T-cell (primary cell): ENCODE measurements at regions of chr6 and their contacts with region 1.

Region 1: DNA sequence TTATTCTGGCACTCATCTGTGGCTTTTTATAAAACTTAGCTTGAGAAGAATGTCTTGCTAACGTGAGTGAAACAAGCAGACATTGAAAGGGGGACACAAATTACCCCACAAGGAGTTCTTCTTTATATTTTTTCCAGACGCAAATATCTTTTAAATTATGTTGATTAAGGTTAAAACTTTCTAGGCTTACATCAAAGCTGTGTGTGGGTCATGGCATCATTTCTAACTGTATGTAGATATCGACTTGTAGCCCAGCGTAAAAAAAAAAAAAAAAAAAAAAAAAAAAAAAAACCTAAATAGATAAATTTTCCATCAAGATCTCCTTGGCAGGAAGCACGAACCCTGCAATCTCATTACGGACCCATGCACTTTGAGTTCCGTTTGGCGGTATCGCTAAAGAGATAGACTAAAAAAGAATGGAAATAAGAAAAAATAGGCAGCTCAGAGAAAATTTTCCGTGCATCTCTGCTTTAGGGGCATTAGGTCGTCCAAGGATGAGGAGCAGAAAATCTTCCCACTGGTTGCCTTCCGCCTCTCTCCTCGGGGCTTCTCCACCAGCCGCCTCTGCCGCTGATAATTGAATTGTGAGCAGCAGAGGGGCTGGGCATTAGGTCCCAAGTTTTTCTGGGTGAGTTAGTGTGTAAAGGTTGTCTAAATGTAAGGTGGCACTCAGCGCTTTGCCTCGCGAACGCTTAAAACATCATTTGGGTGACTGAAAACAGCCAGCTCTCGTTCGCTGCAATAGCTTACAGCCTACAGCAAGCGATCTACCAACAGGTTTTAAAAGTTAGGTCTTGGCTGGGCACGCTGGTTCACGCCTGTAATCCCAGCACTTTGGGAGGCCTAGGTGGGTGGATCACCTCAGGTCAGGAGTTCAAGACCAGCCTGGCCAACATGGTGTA is 194.0 kb downstream of the TRIM27 start:
- DNase-seq: no peak
- ATAC-seq: no peak
- H3K4me3 ChIP-seq: peak overlapping the region in 1 of 2 donors; percentile 2
- H3K4me3 Mint-ChIP-seq: peak overlapping the region; percentile 70 to 79 (median 72)
- H3K27ac ChIP-seq: no peak overlapping the region
- H3K27ac Mint-ChIP-seq: peak overlapping the region in 1 of 2 donors; percentile 61
- H3K4me1 ChIP-seq: peaks cover 0 to 13% of the 10 kb centered on the region in 2 experiments
- H3K4me1 Mint-ChIP-seq: peaks cover 12 to 22% (median 20%) of the 10 kb centered on the region in 3 donors
- H3K27me3 ChIP-seq: peaks cover 30 to 51% of the 10 kb centered on the region in 2 experiments
- H3K27me3 Mint-ChIP-seq: peaks cover 89 to 92% of the 10 kb centered on the region in 2 donors

Region 2: GRCh38 chr6:27902335-27903314 is 827.1 kb before region 1 on chr6:
- CTCF ChIA-PET with region 1: no interaction called
- POLR2A ChIA-PET with region 1: interaction called in 1 of 2 experiments, 13 read pairs
- DNase-seq: peak; percentile 64 to 95 (median 84)
- ATAC-seq: peak; percentile 84 to 91 (median 88)
- H3K4me3 ChIP-seq: peak overlapping the region; percentile 69 to 92
- H3K4me3 Mint-ChIP-seq: peak overlapping the region; percentile 86 to 88 (median 87)
- H3K27ac ChIP-seq: peak overlapping the region; percentile 93
- H3K27ac Mint-ChIP-seq: peak overlapping the region; percentile 96 to 98
- H3K4me1 ChIP-seq: peaks cover 2 to 6% of the 10 kb centered on the region in 2 experiments
- H3K4me1 Mint-ChIP-seq: peaks cover 6 to 23% (median 20%) of the 10 kb centered on the region in 3 donors
- H3K27me3 ChIP-seq: peaks cover 0 to 7% of the 10 kb centered on the region in 2 experiments
- H3K27me3 Mint-ChIP-seq: peaks cover 4 to 15% of the 10 kb centered on the region in 2 donors

Region 3: GRCh38 chr6:28696682-28697081 is 33.1 kb before region 1 on chr6:
- CTCF ChIA-PET with region 1: no interaction called
- POLR2A ChIA-PET with region 1: no interaction called
- DNase-seq: no peak
- ATAC-seq: no peak
- H3K4me3 ChIP-seq: no peak overlapping the region
- H3K4me3 Mint-ChIP-seq: no peak overlapping the region
- H3K27ac ChIP-seq: no peak overlapping the region
- H3K27ac Mint-ChIP-seq: no peak overlapping the region
- H3K4me1 ChIP-seq: peaks cover 0 to 6% of the 10 kb centered on the region in 2 experiments
- H3K4me1 Mint-ChIP-seq: peaks cover 7 to 32% (median 10%) of the 10 kb centered on the region in 3 donors
- H3K27me3 ChIP-seq: peaks cover 21 to 52% of the 10 kb centered on the region in 2 experiments
- H3K27me3 Mint-ChIP-seq: peaks cover 89 to 96% of the 10 kb centered on the region in 2 donors

Region 4: DNA sequence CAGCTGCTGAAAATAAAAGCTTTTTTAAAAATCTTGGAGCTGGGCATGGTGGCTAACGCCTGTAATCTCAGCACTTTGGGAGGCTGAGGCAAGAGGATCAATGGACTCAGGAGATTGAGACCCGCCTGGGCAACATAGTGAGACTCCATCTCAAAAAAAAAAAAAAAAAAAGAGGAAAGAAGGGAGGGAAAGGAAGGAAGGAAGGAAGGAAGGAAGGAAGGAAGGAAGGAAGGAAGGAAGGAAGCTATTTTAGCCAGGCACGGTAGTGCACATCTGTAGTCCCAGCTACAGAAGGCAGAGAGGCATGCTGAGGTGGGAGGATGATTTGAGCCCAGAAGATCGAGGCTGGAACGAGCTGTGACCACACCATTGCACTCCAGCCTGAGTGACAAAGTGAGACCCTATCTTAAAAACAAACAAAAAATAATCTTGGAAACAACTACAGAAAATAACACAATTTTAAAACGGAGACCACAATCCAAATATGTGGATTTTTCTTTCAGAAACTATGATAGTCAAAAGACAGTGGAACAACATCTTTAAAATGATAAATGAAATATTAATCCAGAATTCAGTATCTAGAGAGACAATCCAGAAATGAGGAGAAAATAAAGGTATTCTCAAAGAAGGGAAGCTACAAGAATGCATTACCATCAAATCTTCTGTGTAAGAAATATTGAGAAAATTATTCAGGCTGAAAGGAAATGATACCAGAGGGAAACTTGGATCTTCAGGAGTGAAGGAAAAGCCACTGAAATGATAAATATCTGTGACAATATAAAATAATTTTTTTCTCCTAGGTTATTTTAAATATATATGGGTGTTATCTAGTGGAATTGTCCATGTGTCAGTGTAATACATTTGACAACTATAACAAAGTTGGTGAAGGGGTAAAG is 22.1 kb before region 1 on chr6:
- CTCF ChIA-PET with region 1: no interaction called
- POLR2A ChIA-PET with region 1: no interaction called
- DNase-seq: no peak
- ATAC-seq: no peak
- H3K4me3 ChIP-seq: no peak overlapping the region
- H3K4me3 Mint-ChIP-seq: no peak overlapping the region
- H3K27ac ChIP-seq: no peak overlapping the region
- H3K27ac Mint-ChIP-seq: no peak overlapping the region
- H3K4me1 ChIP-seq: peaks cover 0 to 8% of the 10 kb centered on the region in 2 experiments
- H3K4me1 Mint-ChIP-seq: peaks cover 7 to 13% (median 10%) of the 10 kb centered on the region in 3 donors
- H3K27me3 ChIP-seq: peaks cover 14 to 38% of the 10 kb centered on the region in 2 experiments
- H3K27me3 Mint-ChIP-seq: peaks cover 80 to 89% of the 10 kb centered on the region in 2 donors

Region 5: GRCh38 chr6:29414588-29414987 is 684.8 kb after region 1 on chr6 and contains the start of gene OR12D1:
- CTCF ChIA-PET with region 1: no interaction called
- POLR2A ChIA-PET with region 1: no interaction called
- DNase-seq: no peak
- ATAC-seq: no peak
- H3K4me3 ChIP-seq: no peak within 1 kb of the TSS
- H3K4me3 Mint-ChIP-seq: no peak within 1 kb of the TSS
- H3K27ac ChIP-seq: no peak within 1 kb of the TSS
- H3K27ac Mint-ChIP-seq: no peak within 1 kb of the TSS
- H3K4me1 ChIP-seq: no peaks in the 10 kb centered on the region
- H3K4me1 Mint-ChIP-seq: no peaks in the 10 kb centered on the region
- H3K27me3 ChIP-seq: peaks cover 0 to 10% of the 10 kb centered on the region in 2 experiments
- H3K27me3 Mint-ChIP-seq: peaks cover 35 to 46% of the 10 kb centered on the region in 2 donors
- total RNA-seq, gene OR12D1: not detected